AG04449 (cell line): ENCODE measurements at regions of chr3 and their contacts with region 1.

Region 1: DNA sequence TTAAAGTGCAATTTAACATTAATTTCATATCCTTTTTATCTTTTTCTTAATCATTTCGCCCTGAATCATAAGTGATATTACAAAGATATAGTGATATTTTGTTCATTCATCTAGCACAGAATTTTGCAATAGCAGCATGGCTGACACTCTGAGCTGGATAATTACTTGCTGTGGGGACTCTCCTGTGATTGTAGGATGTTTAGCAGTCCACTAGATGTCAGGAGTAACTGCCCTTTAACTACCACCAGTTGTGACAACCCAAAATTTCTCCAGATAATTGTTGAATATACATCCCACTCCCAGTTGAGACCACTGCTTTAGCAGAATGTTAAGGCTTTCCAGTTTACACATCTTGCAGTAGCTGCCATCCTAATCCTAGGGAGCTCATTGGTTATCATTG is 196.8 kb upstream of the MBNL1 start:
- DNase-seq: no peak
- H3K4me3 ChIP-seq: no peak overlapping the region
- CTCF ChIP-seq: peak; percentile 48

Region 2: GRCh38 chr3:151903501-151903991 is 168.4 kb before region 1 on chr3:
- CTCF ChIA-PET with region 1: no interaction called
- POLR2A ChIA-PET with region 1: no interaction called
- DNase-seq: no peak
- H3K4me3 ChIP-seq: no peak overlapping the region
- CTCF ChIP-seq: no peak

Region 3: GRCh38 chr3:152030320-152030719 is 41.6 kb before region 1 on chr3:
- CTCF ChIA-PET with region 1: no interaction called
- POLR2A ChIA-PET with region 1: no interaction called
- DNase-seq: no peak
- H3K4me3 ChIP-seq: no peak overlapping the region
- CTCF ChIP-seq: no peak

Region 4: GRCh38 chr3:152061296-152061695 is 10.6 kb before region 1 on chr3:
- CTCF ChIA-PET with region 1: interaction called, 20 read pairs
- POLR2A ChIA-PET with region 1: no interaction called
- DNase-seq: no peak
- H3K4me3 ChIP-seq: no peak overlapping the region
- CTCF ChIP-seq: no peak

Region 5: DNA sequence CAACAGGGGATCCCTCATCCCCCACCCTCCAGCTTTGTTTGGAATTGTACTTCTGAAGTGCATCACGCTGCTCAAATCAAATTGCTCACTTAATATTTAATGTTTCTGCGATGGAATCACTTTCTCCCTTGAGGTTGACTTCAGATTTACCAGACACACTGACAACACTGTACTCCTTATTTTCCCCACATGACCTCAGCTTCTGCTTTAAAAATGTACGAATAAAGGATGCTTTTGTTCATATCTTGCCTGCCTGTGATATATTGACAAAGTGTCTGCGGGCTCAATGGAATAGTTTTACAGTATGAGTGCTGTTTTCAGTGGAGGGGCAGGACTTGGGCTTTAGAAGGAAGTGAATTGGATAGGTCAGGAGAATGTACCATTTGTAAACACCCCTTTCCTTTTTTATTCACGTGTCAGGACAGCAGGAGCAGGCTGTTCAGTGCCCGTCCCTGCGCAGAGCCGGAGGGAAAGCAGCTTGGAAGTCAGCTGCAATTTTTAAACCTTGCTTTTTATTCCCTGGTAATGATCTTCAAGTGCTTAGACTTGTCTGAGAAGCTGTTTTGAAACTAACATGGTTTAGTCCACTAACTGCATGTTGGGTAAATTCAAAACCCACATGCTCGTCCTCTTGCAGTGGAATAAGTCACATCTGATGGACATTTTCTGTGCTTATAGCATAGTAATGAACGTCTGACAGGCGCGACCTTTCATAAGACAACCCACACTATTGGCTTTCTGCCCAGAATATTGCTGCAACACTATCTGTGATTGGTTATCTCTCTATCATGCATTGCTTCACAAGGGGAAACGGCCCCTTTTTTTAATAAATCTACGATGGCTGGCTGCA is 226.7 kb after region 1 on chr3:
- CTCF ChIA-PET with region 1: interaction called, 20 read pairs
- POLR2A ChIA-PET with region 1: no interaction called
- DNase-seq: peak; percentile 97
- H3K4me3 ChIP-seq: peak overlapping the region; percentile 44
- CTCF ChIP-seq: no peak

Region 6: GRCh38 chr3:152524198-152525140 is 452.5 kb after region 1 on chr3:
- CTCF ChIA-PET with region 1: interaction called, 16 read pairs
- POLR2A ChIA-PET with region 1: no interaction called
- DNase-seq: peak; percentile 23
- H3K4me3 ChIP-seq: no peak overlapping the region
- CTCF ChIP-seq: peak; percentile 61